Adrenal gland (tissue), 19 donors: ENCODE measurements at regions of chr18 and their contacts with region 1.

Region 1: GRCh38 chr18:5066380-5066977 is 130.6 kb downstream of the AKAIN1 start:
- DNase-seq: no peak
- H3K4me3 ChIP-seq: no peak overlapping the region
- H3K27ac ChIP-seq: no peak overlapping the region
- H3K4me1 ChIP-seq: no peaks in the 10 kb centered on the region
- H3K27me3 ChIP-seq: no peaks in the 10 kb centered on the region
- CTCF ChIP-seq: peak in 2 of 6 experiments; percentile 8 to 25
- POLR2A ChIP-seq: no peak

Region 2: DNA sequence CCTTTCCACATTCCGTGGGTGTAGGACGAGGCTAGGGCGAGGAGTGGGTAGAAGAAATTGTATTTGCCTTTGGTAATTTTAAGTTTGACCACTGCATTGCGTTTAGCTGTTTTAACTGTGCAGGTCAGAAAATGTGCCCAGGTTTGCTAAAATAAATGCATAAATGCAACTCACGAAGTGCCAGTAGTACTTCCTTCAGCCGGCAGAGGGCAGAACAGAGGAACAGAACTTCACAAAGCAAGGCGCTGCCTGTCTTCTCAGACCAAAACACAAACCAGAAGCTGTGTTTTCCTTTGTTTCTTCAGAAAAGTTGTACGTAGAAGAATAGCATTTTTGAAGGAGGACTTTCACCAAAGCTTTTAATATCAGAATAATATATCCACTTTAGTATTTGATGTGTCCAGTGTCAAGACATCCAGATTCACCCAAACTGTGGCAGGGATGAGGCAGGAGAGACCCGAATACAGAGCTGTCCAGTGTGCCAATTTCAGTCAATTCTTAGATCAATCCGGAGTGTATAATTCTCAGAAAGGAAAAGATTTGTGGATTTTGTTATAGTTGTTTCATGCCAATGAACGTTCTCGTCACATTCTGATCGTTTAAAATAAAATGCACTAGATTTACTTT is 960.0 kb before region 1 on chr18:
- intact Hi-C with region 1: loop called in 1 of 2 experiments (anchors 10 kb)
- DNase-seq: peak; percentile 40 to 92 (median 75)
- H3K4me3 ChIP-seq: no peak overlapping the region
- H3K27ac ChIP-seq: no peak overlapping the region
- H3K4me1 ChIP-seq: no peaks in the 10 kb centered on the region
- H3K27me3 ChIP-seq: no peaks in the 10 kb centered on the region
- CTCF ChIP-seq: peak; percentile 72 to 82 (median 78)
- POLR2A ChIP-seq: no peak